HepG2 (cell line): ENCODE measurements at regions of chr4 and their contacts with region 1.

Region 1: GRCh38 chr4:138242076-138242833 is at the start of gene SLC7A11:
- DNase-seq: peak; percentile 97
- ATAC-seq: peak; percentile 97
- H3K4me3 ChIP-seq: peak within 1 kb of the TSS; percentile 77 to 96 (median 83)
- H3K27ac ChIP-seq: peak within 1 kb of the TSS; percentile 93
- H3K4me1 ChIP-seq: peaks cover 27% of the 10 kb centered on the region
- H3K27me3 ChIP-seq: no peaks in the 10 kb centered on the region; a peak in 1 of 5 replicates
- CTCF ChIP-seq: no peak
- EP300 ChIP-seq: peak in 1 of 2 experiments; percentile 91; a peak in 3 of 4 replicates
- POLR2A ChIP-seq: peak; percentile 74 to 96
- RAD21 ChIP-seq: no peak
- total RNA-seq, gene SLC7A11: 11.9 and 15.7 TPM in 2 replicates

Region 2: GRCh38 chr4:138199568-138200235 is 42.6 kb before region 1 on chr4:
- CTCF ChIA-PET with region 1: no interaction called
- POLR2A ChIA-PET with region 1: interaction called, 38 read pairs
- in situ Hi-C with region 1: no loop called
- intact Hi-C with region 1: loop called (anchors 1 kb)
- DNase-seq: peak; percentile 98
- ATAC-seq: peak; percentile 100
- H3K4me3 ChIP-seq: peak overlapping the region in 2 of 3 experiments; percentile 3 to 40; a peak in 2 of 6 replicates
- H3K27ac ChIP-seq: peak overlapping the region; percentile 90
- H3K4me1 ChIP-seq: peaks cover 60% of the 10 kb centered on the region
- H3K27me3 ChIP-seq: no peaks in the 10 kb centered on the region
- CTCF ChIP-seq: no peak
- EP300 ChIP-seq: peak; percentile 31 to 94; a peak in 2 of 4 replicates
- POLR2A ChIP-seq: peak in 1 of 2 experiments; percentile 72; a peak in 2 of 4 replicates
- RAD21 ChIP-seq: no peak; the same call in 1 of the 2 replicates

Region 3: DNA sequence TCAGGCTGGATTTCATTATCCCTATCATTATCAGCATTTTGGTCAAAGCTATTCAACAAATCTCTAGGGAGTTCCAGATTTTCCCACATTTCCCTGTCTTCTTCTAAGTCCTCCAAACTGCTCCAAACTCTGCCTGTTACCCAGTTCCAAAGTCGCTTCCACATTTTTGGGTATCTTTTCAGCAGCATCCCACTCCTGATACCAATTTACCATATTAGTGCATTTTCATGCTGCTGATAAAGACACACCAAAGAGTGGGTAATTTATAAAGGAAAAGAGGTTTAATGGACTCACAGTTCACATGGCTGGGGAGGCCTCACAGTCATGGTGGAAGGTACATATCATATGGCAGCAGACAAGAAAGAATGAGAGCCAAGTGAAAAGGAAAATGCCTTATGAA is 132.7 kb after region 1 on chr4:
- CTCF ChIA-PET with region 1: no interaction called
- POLR2A ChIA-PET with region 1: no interaction called
- in situ Hi-C with region 1: no loop called
- intact Hi-C with region 1: no loop called
- DNase-seq: no peak
- ATAC-seq: no peak
- H3K4me3 ChIP-seq: no peak overlapping the region
- H3K27ac ChIP-seq: no peak overlapping the region
- H3K4me1 ChIP-seq: peaks cover 7% of the 10 kb centered on the region; the same call in 1 of the 2 replicates
- H3K27me3 ChIP-seq: no peaks in the 10 kb centered on the region
- CTCF ChIP-seq: no peak
- EP300 ChIP-seq: no peak
- POLR2A ChIP-seq: no peak
- RAD21 ChIP-seq: no peak

Region 4: DNA sequence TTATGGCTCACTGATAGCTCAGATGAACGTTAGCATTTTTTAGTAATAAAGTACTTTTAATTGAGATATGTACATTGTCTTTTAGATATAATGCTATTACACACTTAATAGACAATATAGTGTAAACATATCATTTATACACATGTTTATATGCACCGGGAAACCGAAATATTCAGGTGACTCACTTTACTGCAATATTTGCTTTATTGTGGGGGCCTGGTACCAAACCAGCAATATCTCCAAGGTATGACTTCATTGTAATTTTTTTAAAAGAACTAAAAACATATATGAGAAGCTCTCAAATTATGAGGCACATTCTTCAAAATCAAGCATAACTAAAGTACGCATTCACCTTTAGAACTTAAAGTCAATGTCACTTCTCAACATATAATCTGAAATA is 231.1 kb after region 1 on chr4:
- CTCF ChIA-PET with region 1: no interaction called
- POLR2A ChIA-PET with region 1: no interaction called
- in situ Hi-C with region 1: no loop called
- intact Hi-C with region 1: no loop called
- DNase-seq: no peak
- ATAC-seq: no peak
- H3K4me3 ChIP-seq: no peak overlapping the region
- H3K27ac ChIP-seq: no peak overlapping the region
- H3K4me1 ChIP-seq: no peaks in the 10 kb centered on the region
- H3K27me3 ChIP-seq: no peaks in the 10 kb centered on the region
- CTCF ChIP-seq: no peak
- EP300 ChIP-seq: no peak
- POLR2A ChIP-seq: no peak
- RAD21 ChIP-seq: no peak

Region 5: GRCh38 chr4:138555584-138555983 is 313.3 kb after region 1 on chr4:
- CTCF ChIA-PET with region 1: no interaction called
- POLR2A ChIA-PET with region 1: no interaction called
- in situ Hi-C with region 1: no loop called
- intact Hi-C with region 1: loop called (anchors 5 kb)
- DNase-seq: peak; percentile 45
- ATAC-seq: peak; percentile 93
- H3K4me3 ChIP-seq: no peak overlapping the region
- H3K27ac ChIP-seq: no peak overlapping the region
- H3K4me1 ChIP-seq: no peaks in the 10 kb centered on the region
- H3K27me3 ChIP-seq: no peaks in the 10 kb centered on the region
- CTCF ChIP-seq: peak; percentile 56
- EP300 ChIP-seq: no peak
- POLR2A ChIP-seq: no peak
- RAD21 ChIP-seq: no peak; the same call in 1 of the 2 replicates